Tibial artery (tissue), 4 donors: ENCODE measurements at regions of chr4 and their contacts with region 1.

Region 1: DNA sequence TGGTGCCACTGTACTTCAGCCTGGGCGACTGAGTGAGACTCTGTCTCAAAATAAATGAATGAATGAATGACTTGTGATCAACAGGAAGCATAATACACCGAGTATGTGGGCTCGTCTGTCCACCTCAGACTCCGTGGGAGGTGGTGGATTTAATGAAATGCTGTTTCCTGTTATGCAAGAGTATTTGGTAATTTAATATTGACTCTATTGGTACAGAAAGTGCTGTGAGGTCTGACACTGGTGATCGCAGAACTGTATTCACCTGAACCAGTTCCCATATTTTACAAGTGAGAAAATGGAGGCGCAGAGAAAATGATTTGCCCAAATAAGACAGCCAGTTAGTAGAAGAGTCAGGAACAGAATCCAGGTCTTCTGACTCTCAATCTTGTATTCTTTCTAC is 423.3 kb downstream of the RAPGEF2 start:
- DNase-seq: no peak
- H3K4me3 ChIP-seq: no peak overlapping the region
- H3K27ac ChIP-seq: no peak overlapping the region
- H3K4me1 ChIP-seq: no peaks in the 10 kb centered on the region
- H3K27me3 ChIP-seq: no peaks in the 10 kb centered on the region
- CTCF ChIP-seq: no peak

Region 2: DNA sequence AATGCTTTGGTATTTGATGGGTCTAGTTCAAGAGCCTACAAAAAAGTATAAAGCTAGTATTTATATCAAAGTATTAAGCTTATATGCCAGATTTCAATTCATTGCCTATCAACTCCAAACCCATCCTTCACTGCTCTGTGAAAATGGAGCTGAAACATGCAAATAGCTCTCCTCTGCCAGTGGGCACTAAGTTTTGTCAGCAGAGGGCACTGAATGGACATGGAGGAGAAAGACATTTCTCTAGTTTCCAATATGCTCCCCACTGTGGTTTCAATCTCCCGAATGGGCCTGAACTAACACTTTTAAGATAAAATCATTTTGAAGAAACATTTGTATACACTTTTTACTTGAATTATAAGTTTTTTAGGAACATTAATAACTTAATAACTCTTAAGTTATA is 815.4 kb before region 1 on chr4:
- intact Hi-C with region 1: loop called (anchors 5 kb)
- DNase-seq: no peak
- H3K4me3 ChIP-seq: no peak overlapping the region
- H3K27ac ChIP-seq: no peak overlapping the region
- H3K4me1 ChIP-seq: no peaks in the 10 kb centered on the region
- H3K27me3 ChIP-seq: no peaks in the 10 kb centered on the region
- CTCF ChIP-seq: no peak

Region 3: DNA sequence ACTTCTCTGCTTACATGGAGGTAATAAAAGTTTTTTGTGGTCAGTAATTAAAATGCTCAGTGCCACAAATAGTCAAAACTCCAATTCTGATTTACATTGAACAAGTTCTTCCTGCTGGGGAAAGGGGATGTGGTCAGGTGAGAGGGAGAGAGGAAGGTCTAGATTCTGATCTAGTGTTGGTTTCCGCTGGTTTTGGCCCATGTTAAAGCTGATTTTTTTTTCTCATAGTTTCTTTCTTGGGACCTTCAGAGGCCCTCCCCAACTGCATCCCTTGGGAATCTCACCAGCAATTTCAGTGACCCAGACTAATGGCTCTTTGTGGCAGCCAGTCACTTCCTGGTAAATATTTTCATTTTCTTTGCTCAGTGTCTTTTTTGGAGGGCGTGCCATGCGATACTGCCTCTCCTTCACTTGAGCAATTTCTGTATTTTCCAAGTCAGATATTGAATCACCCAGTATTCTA is 90.6 kb before region 1 on chr4:
- intact Hi-C with region 1: no loop called
- DNase-seq: no peak
- H3K4me3 ChIP-seq: no peak overlapping the region
- H3K27ac ChIP-seq: peak overlapping the region; percentile 54 to 63
- H3K4me1 ChIP-seq: peaks cover 0 to 38% (median 21%) of the 10 kb centered on the region in 4 donors
- H3K27me3 ChIP-seq: no peaks in the 10 kb centered on the region
- CTCF ChIP-seq: no peak

Region 4: DNA sequence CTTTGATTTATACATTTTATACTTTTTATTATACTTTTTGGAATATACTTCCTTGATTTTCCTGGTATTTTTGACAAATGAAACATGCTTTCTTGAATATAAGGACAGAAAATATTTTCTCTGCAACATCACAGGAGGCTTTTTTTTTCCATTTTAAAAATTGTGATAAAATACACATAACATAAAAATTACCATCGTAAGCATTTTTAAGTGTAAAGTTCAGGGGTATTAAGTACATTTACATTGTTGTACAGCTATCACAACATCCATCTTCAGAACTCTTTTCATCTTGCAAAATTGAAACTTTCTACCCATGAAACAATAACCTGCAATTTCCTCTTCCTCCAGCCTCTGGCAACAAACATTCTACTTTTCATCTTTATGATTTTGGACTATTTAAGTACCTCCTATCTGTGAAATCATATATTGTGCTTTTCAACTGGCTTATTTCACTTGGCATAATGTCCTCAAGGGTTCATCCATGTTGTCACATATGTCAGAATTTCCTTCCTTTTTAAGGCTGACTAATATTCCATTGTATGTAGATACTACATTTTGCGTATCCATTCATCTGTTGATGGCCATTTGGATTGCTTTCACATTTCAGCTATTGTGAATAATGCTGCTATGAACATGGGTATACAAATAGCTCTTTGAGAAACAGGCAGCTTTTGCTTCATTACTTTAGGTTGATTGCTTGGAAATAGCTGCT is 10.7 kb before region 1 on chr4:
- intact Hi-C with region 1: no loop called
- DNase-seq: no peak
- H3K4me3 ChIP-seq: no peak overlapping the region
- H3K27ac ChIP-seq: no peak overlapping the region
- H3K4me1 ChIP-seq: peaks cover 0 to 3% (median 0%) of the 10 kb centered on the region in 4 donors
- H3K27me3 ChIP-seq: no peaks in the 10 kb centered on the region
- CTCF ChIP-seq: no peak